ENCODE measurements at regions of chr11 and their contacts with region 1.

Region 1: DNA sequence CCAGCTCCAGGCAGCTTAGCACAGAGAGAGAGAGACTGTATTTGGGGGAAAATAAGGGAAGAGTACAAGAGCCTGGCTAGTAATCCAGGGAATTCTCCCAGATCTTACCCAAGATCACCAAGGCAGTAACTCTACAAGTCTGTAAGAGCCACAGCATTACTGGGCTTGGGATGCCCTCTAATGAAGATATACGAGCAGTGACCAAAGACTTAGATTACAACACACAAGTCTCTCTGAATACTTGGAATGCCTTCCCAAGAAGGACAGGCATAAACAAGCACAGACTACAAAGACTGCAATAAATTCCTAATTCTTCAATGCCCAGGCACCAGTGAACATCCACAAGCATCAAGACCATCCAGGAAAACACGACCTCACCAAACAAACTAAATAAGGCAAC is 17.7 kb downstream of the DNAJC24 start:
- DNase-seq: no peak
- ATAC-seq: no peak
- H3K4me3 Mint-ChIP-seq: no peak overlapping the region
- H3K27ac Mint-ChIP-seq: no peak overlapping the region
- H3K4me1 Mint-ChIP-seq: no peaks in the 10 kb centered on the region
- H3K27me3 Mint-ChIP-seq: no peaks in the 10 kb centered on the region
- CTCF ChIP-seq: no peak

Region 2: GRCh38 chr11:31325160-31325559 is 62.2 kb before region 1 on chr11:
- CTCF ChIA-PET with region 1: no interaction called
- POLR2A ChIA-PET with region 1: no interaction called
- intact Hi-C with region 1: no loop called
- DNase-seq: no peak
- ATAC-seq: no peak
- H3K4me3 Mint-ChIP-seq: no peak overlapping the region
- H3K27ac Mint-ChIP-seq: no peak overlapping the region
- H3K4me1 Mint-ChIP-seq: no peaks in the 10 kb centered on the region
- H3K27me3 Mint-ChIP-seq: peaks cover 2% of the 10 kb centered on the region
- CTCF ChIP-seq: no peak

Region 3: DNA sequence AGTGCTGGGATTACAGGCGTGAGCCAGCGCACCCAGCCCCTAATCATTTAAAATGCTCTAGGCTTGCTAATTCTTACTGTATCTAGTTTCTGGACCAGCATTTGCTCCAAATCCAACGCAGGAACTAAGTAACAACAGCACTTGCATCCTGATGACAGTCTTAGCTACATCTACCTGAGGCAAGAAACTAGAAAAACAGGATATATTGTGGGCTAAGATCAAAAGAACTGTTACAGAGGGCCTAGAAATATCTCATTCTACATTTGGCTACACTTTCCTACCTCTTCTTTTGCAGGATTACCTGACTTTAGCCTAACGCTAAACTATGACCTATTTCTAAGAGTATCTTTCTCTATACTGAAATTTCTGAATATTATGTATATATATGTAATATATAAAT is 25.6 kb before region 1 on chr11:
- CTCF ChIA-PET with region 1: no interaction called
- POLR2A ChIA-PET with region 1: no interaction called
- intact Hi-C with region 1: no loop called
- DNase-seq: no peak
- ATAC-seq: no peak
- H3K4me3 Mint-ChIP-seq: no peak overlapping the region
- H3K27ac Mint-ChIP-seq: no peak overlapping the region
- H3K4me1 Mint-ChIP-seq: peaks cover 7% of the 10 kb centered on the region
- H3K27me3 Mint-ChIP-seq: peaks cover 16% of the 10 kb centered on the region
- CTCF ChIP-seq: no peak

Region 4: DNA sequence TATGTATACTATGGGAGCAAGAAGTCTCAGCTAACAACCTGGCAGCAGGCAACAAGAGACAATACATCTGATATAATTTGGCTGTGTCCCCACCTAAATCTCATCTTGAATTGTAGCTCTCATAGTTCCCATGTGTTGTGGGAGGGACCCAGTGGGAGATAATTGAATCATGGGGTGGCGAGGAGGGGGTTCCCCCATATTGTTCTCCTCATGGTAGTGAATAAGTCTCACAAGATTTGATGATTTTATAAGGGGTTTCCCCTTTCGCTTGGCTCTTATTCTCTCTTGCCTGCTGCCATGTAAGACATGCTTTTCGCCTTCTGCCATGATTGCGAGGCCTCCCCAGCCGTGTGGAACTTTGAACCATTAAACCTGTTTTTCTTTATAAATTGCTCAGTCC is 11.5 kb before region 1 on chr11:
- CTCF ChIA-PET with region 1: no interaction called
- POLR2A ChIA-PET with region 1: no interaction called
- intact Hi-C with region 1: loop called (anchors 2 kb)
- DNase-seq: no peak
- ATAC-seq: no peak
- H3K4me3 Mint-ChIP-seq: no peak overlapping the region
- H3K27ac Mint-ChIP-seq: no peak overlapping the region
- H3K4me1 Mint-ChIP-seq: peaks cover 16% of the 10 kb centered on the region
- H3K27me3 Mint-ChIP-seq: no peaks in the 10 kb centered on the region
- CTCF ChIP-seq: no peak

Region 5: GRCh38 chr11:31474083-31474482 is 86.7 kb after region 1 on chr11:
- CTCF ChIA-PET with region 1: no interaction called
- POLR2A ChIA-PET with region 1: no interaction called
- intact Hi-C with region 1: no loop called
- DNase-seq: no peak
- ATAC-seq: no peak
- H3K4me3 Mint-ChIP-seq: no peak overlapping the region
- H3K27ac Mint-ChIP-seq: no peak overlapping the region
- H3K4me1 Mint-ChIP-seq: no peaks in the 10 kb centered on the region
- H3K27me3 Mint-ChIP-seq: no peaks in the 10 kb centered on the region
- CTCF ChIP-seq: no peak